ENCODE measurements at regions of chr15 and their contacts with region 1.

Region 1: DNA sequence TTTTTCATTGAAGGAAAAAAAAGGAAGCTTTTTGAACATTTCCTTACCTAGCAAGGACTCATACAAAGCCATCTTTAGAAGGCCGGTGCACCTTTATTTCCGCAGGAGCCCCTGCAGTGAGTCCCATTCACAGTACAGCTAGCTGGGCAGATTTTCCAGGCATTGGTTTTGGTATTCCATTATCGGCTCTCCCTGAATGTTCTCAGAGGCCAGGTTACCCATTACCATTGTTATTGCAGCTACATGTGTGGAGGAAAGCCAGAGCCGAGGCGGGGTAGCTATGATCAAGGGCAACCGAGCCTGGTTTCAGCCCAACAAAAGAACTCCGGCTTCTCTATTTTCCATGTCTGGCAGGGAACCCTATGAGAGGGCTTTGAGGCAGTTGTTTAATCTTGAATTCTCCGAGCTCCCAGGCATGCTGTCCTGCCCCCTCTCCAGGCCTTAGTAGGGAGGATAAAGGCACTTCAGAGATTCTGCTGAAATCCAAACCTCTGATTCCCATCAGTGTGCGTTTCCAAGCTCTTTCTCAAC is 100.3 kb downstream of the LRRK1 start:
- DNase-seq: no peak

Region 2: DNA sequence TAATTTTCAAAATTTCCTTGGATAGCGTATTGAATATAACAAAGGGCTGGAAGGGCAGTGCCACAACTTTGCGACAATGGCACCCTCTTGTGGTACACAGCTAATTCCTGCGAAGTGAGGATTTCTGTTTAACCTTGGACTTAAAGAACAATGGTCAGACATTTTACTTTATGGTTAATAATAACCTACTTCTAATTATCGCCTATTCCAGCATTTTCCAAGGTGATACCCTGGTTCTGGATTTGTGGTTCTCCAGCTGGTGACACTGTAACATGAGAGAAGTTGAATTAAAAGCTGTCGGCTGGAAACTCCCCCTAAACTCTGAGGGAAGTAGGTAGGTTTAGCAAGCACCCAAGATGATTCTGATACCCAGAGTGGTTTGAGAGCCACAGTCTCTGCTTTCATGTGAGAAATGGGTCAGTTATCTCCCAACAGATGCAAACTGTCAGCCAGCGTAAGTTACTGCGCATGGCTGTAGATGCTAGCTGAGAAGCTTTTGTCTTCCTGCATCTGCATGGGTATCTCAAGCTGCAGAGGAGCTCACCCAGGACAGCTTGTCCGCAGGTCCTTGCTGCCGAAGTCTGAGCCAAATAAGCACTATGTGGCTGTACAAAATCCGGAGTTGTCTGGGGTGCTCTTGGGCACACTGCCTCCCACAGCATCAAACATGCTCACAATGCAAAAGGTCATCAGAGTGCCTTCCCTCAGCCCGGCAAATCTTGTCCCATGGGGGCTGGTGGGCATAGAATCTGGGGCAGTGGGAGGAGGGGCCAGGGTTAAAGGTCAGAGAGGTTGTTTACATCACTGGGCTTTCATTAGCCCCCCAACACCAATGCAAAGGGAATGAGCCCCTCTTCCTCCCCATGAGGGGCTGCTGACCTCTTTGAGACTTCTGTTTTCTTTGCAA is 239.1 kb after region 1 on chr15:
- CTCF ChIA-PET with region 1: interaction called, 10 read pairs
- POLR2A ChIA-PET with region 1: interaction called, 3 read pairs
- DNase-seq: peak; percentile 62